ENCODE measurements at regions of chr20 and their contacts with region 1.

Region 1: DNA sequence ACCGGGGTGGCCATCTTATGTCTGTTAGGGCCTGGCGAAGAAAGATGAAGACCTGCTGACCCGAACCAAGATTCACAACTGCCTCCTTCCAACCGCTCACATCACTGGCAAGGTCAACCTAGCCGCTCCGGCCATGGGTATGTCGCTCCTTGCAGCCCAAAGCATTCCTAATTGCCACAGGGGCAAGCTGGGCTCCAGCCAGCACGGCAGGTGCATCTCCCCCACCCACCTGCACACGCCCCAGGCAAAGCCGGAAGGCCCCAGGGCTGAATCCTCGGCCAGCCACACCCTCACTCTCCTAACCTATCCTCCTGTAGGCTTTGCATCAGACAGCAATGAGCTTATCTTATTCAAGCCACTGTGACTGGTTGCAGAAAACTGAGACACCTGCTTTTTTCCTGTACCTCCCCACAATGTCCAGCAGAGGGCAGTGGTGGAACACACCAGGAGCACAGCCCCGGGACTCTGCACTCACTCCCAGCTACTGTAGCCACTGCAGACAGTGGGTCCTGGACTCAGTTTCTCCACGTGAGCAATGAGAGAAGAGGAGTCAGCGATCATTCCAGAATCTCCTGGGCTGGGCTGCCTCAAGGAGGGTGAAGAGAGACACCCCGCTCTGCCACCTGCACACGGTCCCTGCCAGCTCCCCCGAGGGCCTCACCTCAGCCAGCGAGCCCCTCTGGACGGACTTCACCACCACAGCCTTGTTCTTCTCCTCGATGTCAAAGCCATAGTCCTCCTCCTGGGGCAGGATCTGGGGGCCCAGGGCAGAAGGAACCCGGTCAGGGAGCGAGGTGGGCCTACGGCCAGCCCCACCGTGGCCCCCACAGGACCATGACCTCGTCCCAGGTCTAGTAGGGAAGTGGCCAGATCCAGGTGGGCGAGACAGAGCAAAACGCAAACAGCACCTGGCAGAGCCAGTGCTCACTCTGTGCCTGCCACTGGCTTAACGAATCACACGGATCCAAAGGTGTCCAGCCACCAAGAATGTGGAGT is 170.0 kb downstream of the PREX1 start:
- DNase-seq: peak; percentile 71
- H3K4me3 ChIP-seq: no peak overlapping the region
- H3K27ac ChIP-seq: peak overlapping the region; percentile 7
- H3K4me1 ChIP-seq: peaks cover 3% of the 10 kb centered on the region
- H3K27me3 ChIP-seq: no peaks in the 10 kb centered on the region
- CTCF ChIP-seq: peak; percentile 87 to 88
- POLR2A ChIP-seq: no peak

Region 2: GRCh38 chr20:48603443-48604391 is 54.1 kb before region 1 on chr20:
- CTCF ChIA-PET with region 1: no interaction called
- POLR2A ChIA-PET with region 1: no interaction called
- dilution Hi-C with region 1: no loop called
- intact Hi-C with region 1: no loop called
- DNase-seq: no peak
- H3K4me3 ChIP-seq: no peak overlapping the region
- H3K27ac ChIP-seq: no peak overlapping the region
- H3K4me1 ChIP-seq: no peaks in the 10 kb centered on the region
- H3K27me3 ChIP-seq: no peaks in the 10 kb centered on the region
- CTCF ChIP-seq: no peak
- POLR2A ChIP-seq: no peak

Region 3: GRCh38 chr20:48697879-48698724 is 40.3 kb after region 1 on chr20:
- CTCF ChIA-PET with region 1: interaction called, 62 read pairs
- POLR2A ChIA-PET with region 1: no interaction called
- dilution Hi-C with region 1: no loop called
- intact Hi-C with region 1: no loop called
- DNase-seq: peak; percentile 20
- H3K4me3 ChIP-seq: no peak overlapping the region
- H3K27ac ChIP-seq: no peak overlapping the region
- H3K4me1 ChIP-seq: no peaks in the 10 kb centered on the region
- H3K27me3 ChIP-seq: no peaks in the 10 kb centered on the region
- CTCF ChIP-seq: no peak
- POLR2A ChIP-seq: no peak

Region 4: DNA sequence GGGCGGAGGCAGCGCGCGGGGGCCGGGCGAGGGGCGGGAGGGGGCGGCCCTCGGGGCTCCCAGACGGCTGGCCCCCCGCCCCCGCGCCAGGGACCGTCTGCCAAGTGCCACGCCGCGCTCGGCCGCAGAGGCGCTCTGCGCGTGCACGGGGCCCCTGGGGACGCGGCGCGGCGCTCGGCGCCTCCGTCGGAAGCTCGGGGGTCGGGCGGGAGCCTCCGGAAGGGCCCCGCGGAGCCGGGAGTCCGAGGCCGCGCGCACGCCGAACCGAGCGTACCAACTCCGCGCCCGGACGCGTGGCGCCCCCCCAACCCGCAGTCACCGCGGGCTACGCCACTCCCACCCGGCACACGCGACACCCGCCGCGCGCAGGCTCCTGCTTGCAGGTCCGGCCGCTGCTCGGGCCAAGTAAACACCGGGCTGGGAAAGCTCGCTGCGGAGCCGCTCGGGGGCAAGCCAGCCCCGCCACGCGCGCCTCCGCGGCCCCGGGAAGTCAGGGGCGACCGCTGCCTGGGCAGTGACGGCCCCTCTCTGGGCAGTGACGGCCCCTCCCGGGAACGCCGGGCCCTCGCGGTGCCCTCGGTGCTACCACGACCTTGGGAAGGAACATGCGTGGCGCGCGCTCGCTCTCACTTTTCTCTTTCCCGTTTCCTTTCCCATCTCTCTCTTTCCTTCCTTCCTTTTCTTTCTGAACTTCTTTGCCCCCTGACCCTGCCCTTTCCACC is 170.4 kb after region 1 on chr20:
- CTCF ChIA-PET with region 1: interaction called, 43 read pairs
- POLR2A ChIA-PET with region 1: no interaction called
- dilution Hi-C with region 1: no loop called
- intact Hi-C with region 1: loop called (anchors 1 kb)
- DNase-seq: peak; percentile 81
- H3K4me3 ChIP-seq: peak overlapping the region; percentile 14 to 92 (median 26)
- H3K27ac ChIP-seq: peak overlapping the region; percentile 47
- H3K4me1 ChIP-seq: peaks cover 45% of the 10 kb centered on the region
- H3K27me3 ChIP-seq: no peaks in the 10 kb centered on the region
- CTCF ChIP-seq: no peak
- POLR2A ChIP-seq: peak; percentile 83

Region 5: DNA sequence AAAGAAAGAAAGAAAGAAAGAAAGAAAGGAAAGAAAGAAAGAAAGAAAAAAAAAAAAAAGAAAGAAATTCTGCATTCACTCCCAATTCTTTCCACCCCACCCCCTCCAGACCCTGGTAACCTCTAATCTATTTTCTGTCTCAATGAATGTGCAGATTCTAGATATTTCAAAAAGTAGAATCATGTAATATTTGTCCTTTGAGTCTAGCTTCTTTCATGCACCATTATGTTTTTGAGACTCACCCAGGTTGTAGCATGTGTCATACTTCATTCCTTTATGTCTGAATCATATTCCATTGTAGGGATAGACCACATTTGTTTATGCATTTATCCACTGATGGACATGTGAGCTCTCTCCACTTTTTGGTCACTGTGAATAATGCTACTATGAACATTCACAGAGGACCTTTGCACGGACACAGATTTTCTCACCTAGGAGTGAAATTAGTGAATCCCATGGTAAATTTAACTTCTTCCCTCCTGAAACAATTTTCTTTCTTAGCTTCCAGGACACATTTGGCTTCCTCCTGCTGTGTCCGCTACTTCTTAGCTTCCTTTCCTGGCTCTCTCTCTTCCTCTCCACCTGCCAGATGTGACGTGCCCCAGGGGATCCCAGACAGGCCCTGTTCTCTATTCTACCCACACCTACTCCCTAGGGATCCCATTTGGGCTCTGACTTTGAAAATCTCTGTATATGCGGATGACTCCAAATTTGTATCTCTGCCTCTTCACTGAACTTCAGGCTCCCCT is 239.6 kb after region 1 on chr20:
- CTCF ChIA-PET with region 1: interaction called, 22 read pairs
- POLR2A ChIA-PET with region 1: no interaction called
- dilution Hi-C with region 1: loop called (anchors 25 kb)
- intact Hi-C with region 1: no loop called
- DNase-seq: peak; percentile 64
- H3K4me3 ChIP-seq: no peak overlapping the region
- H3K27ac ChIP-seq: peak overlapping the region; percentile 8
- H3K4me1 ChIP-seq: peaks cover 4% of the 10 kb centered on the region
- H3K27me3 ChIP-seq: peaks cover 0 to 4% of the 10 kb centered on the region in 2 experiments
- CTCF ChIP-seq: no peak
- POLR2A ChIP-seq: no peak

Region 6: DNA sequence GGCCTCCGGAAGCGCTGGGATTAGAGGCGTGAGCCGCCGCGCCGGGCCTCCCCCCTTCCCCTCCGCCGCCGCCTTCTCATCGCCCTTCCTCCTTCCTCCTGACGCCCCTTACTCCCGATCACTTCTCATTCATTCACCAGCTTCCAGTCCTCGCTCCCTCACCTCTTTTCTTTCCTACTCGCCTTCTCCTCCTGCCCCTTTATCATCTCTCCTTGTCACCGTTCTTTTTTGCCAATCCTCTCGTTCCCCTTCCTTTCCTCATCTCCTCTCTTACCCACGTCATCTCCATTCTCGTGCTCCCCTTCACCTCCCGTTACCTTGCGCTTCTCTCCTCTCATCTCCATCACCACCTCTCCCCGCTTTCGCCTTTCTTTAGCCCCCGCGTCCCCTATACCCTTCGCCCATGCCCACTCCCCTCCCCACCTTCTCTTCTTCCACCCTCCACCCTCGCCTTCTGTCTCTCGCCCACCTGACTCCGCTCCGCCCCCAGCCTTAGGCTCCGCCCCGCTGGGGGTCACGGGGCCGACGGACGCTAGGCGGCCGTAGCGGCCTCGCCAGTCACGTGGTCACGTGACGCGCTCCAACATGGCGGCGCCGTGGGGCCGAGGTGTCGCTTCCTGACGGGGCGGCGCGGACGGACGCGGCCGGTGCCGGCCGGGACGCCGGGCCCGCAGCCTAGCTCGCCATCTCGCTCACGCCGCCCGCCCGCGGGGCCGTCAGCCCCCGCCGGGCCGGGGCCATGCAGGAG is 263.6 kb after region 1 on chr20 and contains the start of gene ARFGEF2:
- CTCF ChIA-PET with region 1: interaction called, 11 read pairs
- POLR2A ChIA-PET with region 1: no interaction called
- dilution Hi-C with region 1: loop called (anchors 25 kb)
- intact Hi-C with region 1: no loop called
- DNase-seq: peak; percentile 93
- H3K4me3 ChIP-seq: peak within 1 kb of the TSS; percentile 56 to 82 (median 78)
- H3K27ac ChIP-seq: peak within 1 kb of the TSS; percentile 94
- H3K4me1 ChIP-seq: peaks cover 25% of the 10 kb centered on the region
- H3K27me3 ChIP-seq: no peaks in the 10 kb centered on the region
- CTCF ChIP-seq: no peak
- POLR2A ChIP-seq: no peak
- total RNA-seq, gene ARFGEF2: 26.1 and 32.6 TPM in 2 replicates